ENCODE measurements at regions of chr4 and their contacts with region 1.

Region 1: GRCh38 chr4:82510216-82510615 is 51.6 kb downstream of the TMEM150C start:
- DNase-seq: no peak
- H3K4me3 ChIP-seq: no peak overlapping the region
- H3K4me3 Mint-ChIP-seq: no peak overlapping the region
- H3K27ac Mint-ChIP-seq: no peak overlapping the region
- H3K4me1 ChIP-seq: no peaks in the 10 kb centered on the region
- H3K4me1 Mint-ChIP-seq: no peaks in the 10 kb centered on the region
- H3K27me3 ChIP-seq: no peaks in the 10 kb centered on the region
- H3K27me3 Mint-ChIP-seq: no peaks in the 10 kb centered on the region
- CTCF ChIP-seq: no peak

Region 2: GRCh38 chr4:82469791-82470345 is 40.3 kb before region 1 on chr4:
- CTCF ChIA-PET with region 1: no interaction called
- POLR2A ChIA-PET with region 1: no interaction called
- intact Hi-C with region 1: loop called (anchors 2 kb)
- DNase-seq: no peak
- H3K4me3 ChIP-seq: no peak overlapping the region
- H3K4me3 Mint-ChIP-seq: no peak overlapping the region
- H3K27ac Mint-ChIP-seq: no peak overlapping the region
- H3K4me1 ChIP-seq: no peaks in the 10 kb centered on the region
- H3K4me1 Mint-ChIP-seq: no peaks in the 10 kb centered on the region
- H3K27me3 ChIP-seq: no peaks in the 10 kb centered on the region
- H3K27me3 Mint-ChIP-seq: no peaks in the 10 kb centered on the region
- CTCF ChIP-seq: no peak